CD8-positive, alpha-beta T cell (primary cell): ENCODE measurements at regions of chr6 and their contacts with region 1.

Region 1: DNA sequence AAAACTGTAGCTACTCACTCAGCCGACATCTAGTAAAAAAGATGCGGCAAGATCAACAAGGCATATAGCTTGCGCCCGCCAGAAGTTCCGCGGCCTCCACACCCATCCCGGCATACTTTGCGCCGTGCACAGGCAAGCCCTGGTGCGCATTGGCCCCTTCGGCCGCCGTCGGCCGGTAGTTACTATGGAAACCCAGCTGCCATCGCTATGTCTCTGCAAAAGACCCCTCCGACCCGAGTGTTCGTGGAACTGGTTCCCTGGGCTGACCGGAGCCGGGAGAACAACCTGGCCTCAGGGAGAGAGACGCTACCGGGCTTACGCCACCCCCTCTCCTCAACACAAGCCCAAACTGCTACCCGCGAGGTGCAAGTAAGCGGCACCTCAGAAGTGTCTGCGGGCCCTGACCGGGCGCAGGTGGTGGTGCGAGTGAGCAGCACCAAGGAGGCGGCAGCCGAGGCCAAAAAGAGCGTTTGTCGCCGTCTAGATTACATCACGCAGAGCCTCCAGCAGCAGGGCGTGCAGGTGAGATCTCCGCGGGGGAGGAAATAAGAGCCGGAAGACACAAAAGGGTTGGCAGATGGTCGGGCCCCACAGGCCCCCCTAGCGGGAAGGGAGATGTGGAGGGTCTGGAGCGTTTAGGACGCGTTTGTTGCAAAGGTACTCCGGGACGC is at the start of gene IRAK1BP1:
- DNase-seq: peak; percentile 58 to 86 (median 77)
- ATAC-seq: peak; percentile 91
- H3K4me3 ChIP-seq: peak within 1 kb of the TSS; percentile 83 to 88
- H3K4me3 Mint-ChIP-seq: peak within 1 kb of the TSS; percentile 96
- H3K27ac ChIP-seq: peak within 1 kb of the TSS; percentile 76 to 88
- H3K27ac Mint-ChIP-seq: peak within 1 kb of the TSS; percentile 95
- H3K4me1 ChIP-seq: peaks cover 10% of the 10 kb centered on the region
- H3K4me1 Mint-ChIP-seq: peaks cover 27% of the 10 kb centered on the region
- H3K27me3 ChIP-seq: no peaks in the 10 kb centered on the region
- H3K27me3 Mint-ChIP-seq: no peaks in the 10 kb centered on the region
- CTCF ChIP-seq: no peak
- total RNA-seq, gene IRAK1BP1: 1.0 to 1.3 TPM

Region 2: DNA sequence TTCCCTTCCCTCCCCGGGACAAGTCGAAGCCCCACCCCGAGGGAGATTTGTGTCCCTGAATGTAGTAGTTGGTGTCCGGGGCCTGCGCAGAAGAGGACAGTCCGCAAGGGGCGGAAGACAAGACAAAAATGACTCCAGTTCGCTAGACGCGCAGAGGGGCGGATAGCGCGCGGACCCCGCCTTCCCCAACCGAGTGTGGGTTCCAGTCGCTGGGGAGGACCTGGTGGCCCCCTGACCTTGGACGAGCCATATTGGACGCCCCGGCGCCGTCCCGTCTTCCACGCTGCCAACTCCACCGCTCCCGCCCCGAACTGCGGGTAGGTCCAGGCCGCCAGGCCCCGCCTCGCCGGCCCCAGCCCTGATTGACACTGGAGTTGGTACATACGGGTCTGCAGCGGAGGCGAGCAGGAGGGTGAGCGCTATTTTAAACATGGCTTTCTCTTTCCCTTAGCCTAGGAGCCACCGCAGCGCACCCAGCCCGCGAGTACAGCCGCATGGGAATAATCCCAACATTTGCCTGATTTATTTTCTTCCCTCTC is 366.2 kb after region 1 on chr6:
- CTCF ChIA-PET with region 1: no interaction called
- POLR2A ChIA-PET with region 1: no interaction called
- intact Hi-C with region 1: loop called (anchors 1 to 10 kb)
- DNase-seq: peak; percentile 14 to 80 (median 62)
- ATAC-seq: peak; percentile 44
- H3K4me3 ChIP-seq: peak overlapping the region; percentile 66 to 98
- H3K4me3 Mint-ChIP-seq: peak overlapping the region; percentile 99
- H3K27ac ChIP-seq: peak overlapping the region; percentile 46 to 66
- H3K27ac Mint-ChIP-seq: peak overlapping the region; percentile 84
- H3K4me1 ChIP-seq: peaks cover 7% of the 10 kb centered on the region
- H3K4me1 Mint-ChIP-seq: peaks cover 33% of the 10 kb centered on the region
- H3K27me3 ChIP-seq: no peaks in the 10 kb centered on the region
- H3K27me3 Mint-ChIP-seq: no peaks in the 10 kb centered on the region
- CTCF ChIP-seq: no peak

Region 3: GRCh38 chr6:79536954-79537747 is 669.6 kb after region 1 on chr6 and contains the start of gene LCA5:
- CTCF ChIA-PET with region 1: no interaction called
- POLR2A ChIA-PET with region 1: no interaction called
- intact Hi-C with region 1: loop called in 1 of 2 experiments (anchors 1 kb)
- DNase-seq: peak; percentile 54 to 92 (median 79)
- ATAC-seq: peak; percentile 96
- H3K4me3 ChIP-seq: peak within 1 kb of the TSS; percentile 65 to 69
- H3K4me3 Mint-ChIP-seq: no peak within 1 kb of the TSS
- H3K27ac ChIP-seq: peak within 1 kb of the TSS; percentile 14 to 32
- H3K27ac Mint-ChIP-seq: no peak within 1 kb of the TSS
- H3K4me1 ChIP-seq: peaks cover 5% of the 10 kb centered on the region
- H3K4me1 Mint-ChIP-seq: no peaks in the 10 kb centered on the region
- H3K27me3 ChIP-seq: no peaks in the 10 kb centered on the region
- H3K27me3 Mint-ChIP-seq: peaks cover 12% of the 10 kb centered on the region
- CTCF ChIP-seq: no peak
- total RNA-seq, gene LCA5: not detected

Region 4: GRCh38 chr6:79719248-79719960 is 851.9 kb after region 1 on chr6:
- CTCF ChIA-PET with region 1: no interaction called
- POLR2A ChIA-PET with region 1: no interaction called
- intact Hi-C with region 1: loop called in 1 of 2 experiments (anchors 5 kb)
- DNase-seq: no peak
- ATAC-seq: no peak
- H3K4me3 ChIP-seq: no peak overlapping the region
- H3K4me3 Mint-ChIP-seq: no peak overlapping the region
- H3K27ac ChIP-seq: no peak overlapping the region
- H3K27ac Mint-ChIP-seq: no peak overlapping the region
- H3K4me1 ChIP-seq: no peaks in the 10 kb centered on the region
- H3K4me1 Mint-ChIP-seq: no peaks in the 10 kb centered on the region
- H3K27me3 ChIP-seq: no peaks in the 10 kb centered on the region
- H3K27me3 Mint-ChIP-seq: peaks cover 8% of the 10 kb centered on the region
- CTCF ChIP-seq: no peak